PC-9 (cell line): ENCODE measurements at regions of chr17 and their contacts with region 1.

Region 1: GRCh38 chr17:27245230-27245696 is 48.7 kb upstream of the WSB1 start:
- DNase-seq: peak; percentile 62 to 67
- H3K4me3 ChIP-seq: peak overlapping the region; percentile 36; the same call in 1 of the 2 replicates
- H3K27ac ChIP-seq: peak overlapping the region; percentile 79
- H3K4me1 ChIP-seq: peaks cover 82% of the 10 kb centered on the region
- H3K27me3 ChIP-seq: no peaks in the 10 kb centered on the region
- CTCF ChIP-seq: peak; percentile 65

Region 2: GRCh38 chr17:27206447-27206846 is 38.8 kb before region 1 on chr17:
- CTCF ChIA-PET with region 1: no interaction called
- POLR2A ChIA-PET with region 1: no interaction called
- intact Hi-C with region 1: no loop called
- DNase-seq: no peak
- H3K4me3 ChIP-seq: no peak overlapping the region
- H3K27ac ChIP-seq: peak overlapping the region; percentile 60; the same call in 1 of the 2 replicates
- H3K4me1 ChIP-seq: peaks cover 27% of the 10 kb centered on the region
- H3K27me3 ChIP-seq: no peaks in the 10 kb centered on the region
- CTCF ChIP-seq: peak; percentile 33; the same call in 1 of the 2 replicates

Region 3: GRCh38 chr17:27293898-27294688 is 48.8 kb after region 1 on chr17 and contains the start of gene WSB1:
- CTCF ChIA-PET with region 1: interaction called, 4 read pairs
- POLR2A ChIA-PET with region 1: interaction called, 3 read pairs
- intact Hi-C with region 1: loop called (anchors 1 kb)
- DNase-seq: peak; percentile 61 to 84
- H3K4me3 ChIP-seq: peak within 1 kb of the TSS; percentile 99
- H3K27ac ChIP-seq: peak within 1 kb of the TSS; percentile 88
- H3K4me1 ChIP-seq: peaks cover 26% of the 10 kb centered on the region
- H3K27me3 ChIP-seq: no peaks in the 10 kb centered on the region
- CTCF ChIP-seq: no peak; the same call in 1 of the 2 replicates
- total RNA-seq, gene WSB1: 66.2 and 101 TPM in 2 replicates

Region 4: GRCh38 chr17:27327397-27327796 is 82.1 kb after region 1 on chr17:
- CTCF ChIA-PET with region 1: interaction called, 26 read pairs
- POLR2A ChIA-PET with region 1: no interaction called
- intact Hi-C with region 1: no loop called
- DNase-seq: no peak
- H3K4me3 ChIP-seq: no peak overlapping the region
- H3K27ac ChIP-seq: no peak overlapping the region
- H3K4me1 ChIP-seq: peaks cover 30% of the 10 kb centered on the region
- H3K27me3 ChIP-seq: no peaks in the 10 kb centered on the region
- CTCF ChIP-seq: no peak

Region 5: GRCh38 chr17:27332485-27333409 is 87.5 kb after region 1 on chr17:
- CTCF ChIA-PET with region 1: interaction called, 26 read pairs
- POLR2A ChIA-PET with region 1: no interaction called
- intact Hi-C with region 1: loop called (anchors 1 kb)
- DNase-seq: peak; percentile 96 to 98
- H3K4me3 ChIP-seq: peak overlapping the region; percentile 62
- H3K27ac ChIP-seq: peak overlapping the region; percentile 76
- H3K4me1 ChIP-seq: peaks cover 24% of the 10 kb centered on the region
- H3K27me3 ChIP-seq: no peaks in the 10 kb centered on the region
- CTCF ChIP-seq: peak; percentile 81

Region 6: DNA sequence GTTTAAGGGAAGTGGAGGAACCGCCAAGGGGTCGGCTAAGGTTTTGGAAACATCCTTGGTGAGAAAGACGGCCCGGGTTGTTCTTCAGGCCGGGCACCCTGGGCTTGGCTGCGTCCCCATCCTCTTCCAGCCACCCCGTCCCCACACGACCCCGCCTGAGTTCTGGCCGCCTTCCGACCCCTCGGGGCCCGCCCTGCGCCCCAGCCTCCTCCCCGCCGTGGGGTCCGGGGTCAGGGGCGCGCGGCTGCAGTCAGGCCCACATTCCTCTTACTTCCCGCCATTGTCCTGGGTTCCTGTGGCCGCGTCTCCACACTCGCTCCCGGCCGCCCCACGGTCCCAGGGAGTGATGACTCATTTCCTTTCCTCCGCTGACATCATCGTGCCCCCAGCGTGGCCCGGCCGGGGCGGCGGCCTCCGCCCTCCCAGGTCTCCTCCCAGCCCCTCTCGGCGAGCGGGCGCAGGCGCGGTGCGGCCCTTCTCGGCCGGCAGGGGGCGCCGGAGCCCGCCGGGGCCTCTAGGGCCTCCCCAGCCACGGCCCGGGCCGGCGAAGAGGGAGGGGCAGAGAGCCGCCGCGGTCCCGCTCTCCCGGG is 108.3 kb after region 1 on chr17:
- CTCF ChIA-PET with region 1: no interaction called
- POLR2A ChIA-PET with region 1: no interaction called
- intact Hi-C with region 1: loop called (anchors 2 kb)
- DNase-seq: peak; percentile 76 to 92
- H3K4me3 ChIP-seq: peak overlapping the region; percentile 62
- H3K27ac ChIP-seq: peak overlapping the region; percentile 74
- H3K4me1 ChIP-seq: peaks cover 11% of the 10 kb centered on the region; the same call in 1 of the 2 replicates
- H3K27me3 ChIP-seq: no peaks in the 10 kb centered on the region
- CTCF ChIP-seq: peak; percentile 70

Region 7: DNA sequence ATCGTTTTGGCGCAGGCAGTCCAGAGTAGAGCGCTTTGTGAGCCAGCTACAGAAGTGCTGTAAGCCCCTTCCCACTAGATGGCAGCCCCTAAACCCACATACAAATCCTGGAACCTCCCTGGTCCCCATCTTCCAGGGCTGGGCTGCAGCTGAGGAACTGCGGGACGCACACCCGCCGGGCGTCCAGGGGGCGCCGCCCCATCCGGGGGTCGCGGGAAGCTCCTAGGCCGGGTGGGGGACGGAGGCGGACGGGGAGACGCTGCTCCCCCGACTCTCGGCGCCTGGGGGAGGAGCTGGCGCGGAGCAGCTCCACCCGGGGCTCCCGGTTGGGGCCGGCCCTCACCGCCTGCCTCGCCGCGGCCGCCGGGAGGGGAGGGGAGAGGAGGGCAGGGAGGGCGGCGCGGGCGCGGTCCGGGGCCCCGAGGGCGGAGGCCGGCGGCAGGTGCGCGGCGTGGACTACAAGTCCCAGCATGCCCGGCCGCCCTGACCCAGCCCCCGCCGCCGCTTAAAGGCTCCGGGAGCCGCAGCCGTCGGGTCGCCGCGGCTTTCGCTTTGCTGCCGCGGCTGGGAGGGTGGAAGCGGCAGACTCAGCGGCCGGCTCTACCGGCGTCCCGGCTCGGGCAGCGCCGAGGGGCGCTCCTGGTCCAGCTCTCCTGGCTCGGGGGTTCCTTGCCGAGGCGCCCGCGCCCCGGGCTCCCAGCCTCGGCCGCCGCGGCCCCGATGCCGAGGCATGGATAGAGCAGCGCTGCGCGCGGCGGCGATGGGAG is 210.8 kb after region 1 on chr17 and contains the start of gene KSR1:
- CTCF ChIA-PET with region 1: no interaction called
- POLR2A ChIA-PET with region 1: no interaction called
- intact Hi-C with region 1: loop called (anchors 10 kb)
- DNase-seq: peak; percentile 53 to 83
- H3K4me3 ChIP-seq: peak within 1 kb of the TSS; percentile 84
- H3K27ac ChIP-seq: no peak within 1 kb of the TSS
- H3K4me1 ChIP-seq: peaks cover 18% of the 10 kb centered on the region
- H3K27me3 ChIP-seq: no peaks in the 10 kb centered on the region
- CTCF ChIP-seq: no peak
- total RNA-seq, gene KSR1: 19.1 and 24.6 TPM in 2 replicates

Region 8: GRCh38 chr17:27494192-27495091 is 249.2 kb after region 1 on chr17:
- CTCF ChIA-PET with region 1: no interaction called
- POLR2A ChIA-PET with region 1: no interaction called
- intact Hi-C with region 1: loop called (anchors 10 kb)
- DNase-seq: peak; percentile 76 to 84
- H3K4me3 ChIP-seq: peak overlapping the region; percentile 54; the same call in 1 of the 2 replicates
- H3K27ac ChIP-seq: peak overlapping the region; percentile 82
- H3K4me1 ChIP-seq: peaks cover 24% of the 10 kb centered on the region
- H3K27me3 ChIP-seq: no peaks in the 10 kb centered on the region
- CTCF ChIP-seq: peak; percentile 64